WTC11 (cell line): ENCODE measurements at regions of chr3 and their contacts with region 1.

Region 1: DNA sequence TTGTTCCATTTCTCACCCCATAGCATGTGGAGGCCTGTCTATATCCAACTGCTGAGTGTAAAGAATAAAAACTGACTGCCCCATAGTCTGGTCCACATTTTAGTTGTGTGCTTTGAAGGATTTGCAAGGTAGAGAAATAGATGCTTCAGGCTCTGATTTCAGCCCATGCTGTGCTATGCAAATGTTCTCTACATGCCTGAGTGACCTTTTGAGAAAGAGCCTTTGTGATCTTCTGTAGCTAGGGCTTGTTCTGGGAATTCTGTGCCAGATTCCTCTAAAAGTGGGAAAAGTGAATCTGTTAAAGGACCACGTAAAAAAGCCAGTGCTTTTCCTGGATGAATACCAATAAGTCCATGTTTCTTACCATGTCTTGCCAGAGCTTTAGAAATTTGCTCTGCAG is 5.2 kb downstream of the KCTD6 start:
- DNase-seq: no peak
- ATAC-seq: peak; percentile 86
- H3K4me3 Mint-ChIP-seq: peak overlapping the region; percentile 57
- H3K27ac Mint-ChIP-seq: peak overlapping the region; percentile 97
- H3K4me1 Mint-ChIP-seq: peaks cover 58% of the 10 kb centered on the region
- H3K27me3 Mint-ChIP-seq: no peaks in the 10 kb centered on the region
- CTCF ChIP-seq: no peak

Region 2: GRCh38 chr3:58375254-58375653 is 121.8 kb before region 1 on chr3:
- CTCF ChIA-PET with region 1: no interaction called
- POLR2A ChIA-PET with region 1: no interaction called
- DNase-seq: no peak
- ATAC-seq: no peak
- H3K4me3 Mint-ChIP-seq: no peak overlapping the region
- H3K27ac Mint-ChIP-seq: no peak overlapping the region
- H3K4me1 Mint-ChIP-seq: peaks cover 11% of the 10 kb centered on the region
- H3K27me3 Mint-ChIP-seq: no peaks in the 10 kb centered on the region
- CTCF ChIP-seq: no peak

Region 3: DNA sequence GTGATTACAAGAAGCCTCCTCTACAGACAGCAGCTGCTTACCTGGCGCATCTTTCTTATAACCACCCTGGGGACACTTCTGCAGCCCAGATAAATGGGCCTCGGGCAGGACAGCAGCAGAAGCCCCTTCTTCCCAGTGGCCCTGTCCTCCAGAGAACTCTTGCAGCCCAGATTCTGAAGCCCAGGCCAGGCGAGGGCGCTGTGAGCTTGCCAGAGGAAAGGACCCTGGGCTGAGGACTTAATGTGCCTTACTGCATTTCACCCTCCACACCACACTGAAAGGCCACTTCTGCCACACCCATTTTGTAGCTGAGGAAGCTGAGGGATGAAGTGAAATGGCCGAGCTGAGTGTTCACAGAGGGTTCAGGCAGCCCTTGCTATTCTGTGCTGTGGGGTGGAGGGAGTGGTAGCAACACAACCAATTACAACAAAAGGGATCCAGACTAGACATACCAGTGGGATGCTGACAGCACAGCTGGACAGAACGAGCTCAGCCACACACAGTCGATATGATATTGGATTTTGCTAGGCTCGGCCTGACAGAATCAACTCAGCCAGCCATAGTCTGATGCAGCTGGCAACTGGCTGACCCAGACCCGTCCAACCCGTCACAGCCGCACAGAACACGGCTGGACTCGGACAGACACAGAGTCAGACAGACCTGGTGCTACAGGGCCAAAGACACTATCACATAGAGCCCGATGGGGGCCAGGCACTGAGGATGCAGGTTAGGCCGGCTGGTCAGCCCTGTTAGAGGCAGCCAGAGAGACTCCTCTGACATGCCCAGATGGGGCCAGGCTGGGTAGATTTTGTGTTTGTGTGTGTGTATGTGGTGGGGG is 32.6 kb after region 1 on chr3:
- CTCF ChIA-PET with region 1: interaction called, 19 read pairs
- POLR2A ChIA-PET with region 1: no interaction called
- DNase-seq: peak; percentile 88
- ATAC-seq: peak; percentile 88
- H3K4me3 Mint-ChIP-seq: no peak overlapping the region
- H3K27ac Mint-ChIP-seq: peak overlapping the region; percentile 63; the same call in 1 of the 2 replicates
- H3K4me1 Mint-ChIP-seq: peaks cover 14% of the 10 kb centered on the region
- H3K27me3 Mint-ChIP-seq: no peaks in the 10 kb centered on the region
- CTCF ChIP-seq: peak; percentile 32; the same call in 1 of the 2 replicates